ENCODE measurements at regions of chr4 and their contacts with region 1.

Region 1: DNA sequence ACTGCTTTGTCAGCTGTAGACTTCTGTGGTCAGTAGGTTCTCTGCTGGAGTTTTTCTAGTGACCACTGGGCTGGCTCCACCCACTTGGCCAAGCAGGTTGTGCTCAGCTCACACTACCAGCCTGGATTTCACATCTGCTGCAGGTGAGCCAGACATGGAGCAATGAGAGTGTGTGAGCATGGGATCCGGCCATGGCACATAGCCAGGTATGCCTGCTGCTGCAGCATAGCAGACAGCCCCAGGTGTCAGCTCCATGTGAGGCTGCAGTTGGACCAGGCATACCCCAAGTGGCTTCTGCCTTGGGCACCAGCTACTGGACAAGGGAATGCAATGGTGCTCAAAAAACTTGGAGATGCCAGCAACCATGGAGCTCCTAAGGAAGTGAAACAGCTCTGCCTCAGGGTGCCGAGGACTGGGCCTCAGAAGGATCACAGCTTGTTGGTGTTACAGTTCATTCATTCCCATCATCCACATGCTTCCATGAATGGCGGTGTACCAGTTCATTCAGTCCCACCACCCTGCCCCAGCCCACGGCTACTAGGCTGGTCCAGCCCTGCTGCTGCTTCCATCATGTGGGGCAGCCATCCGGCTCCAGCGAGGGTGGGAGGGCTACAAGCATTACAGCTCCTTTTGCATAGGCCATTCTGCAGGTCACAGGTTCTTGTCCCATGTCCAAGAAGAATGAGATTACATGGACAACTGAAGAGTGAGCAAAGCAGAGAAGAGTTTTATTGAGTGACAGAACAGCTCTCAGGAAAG is 389.1 kb upstream of the PCDH7 start:
- DNase-seq: no peak
- H3K4me3 ChIP-seq: no peak overlapping the region
- H3K27ac ChIP-seq: no peak overlapping the region
- H3K4me1 ChIP-seq: no peaks in the 10 kb centered on the region
- H3K27me3 ChIP-seq: no peaks in the 10 kb centered on the region
- CTCF ChIP-seq: no peak

Region 2: GRCh38 chr4:30056016-30056766 is 274.9 kb before region 1 on chr4:
- intact Hi-C with region 1: no loop called
- DNase-seq: no peak
- H3K4me3 ChIP-seq: no peak overlapping the region
- H3K27ac ChIP-seq: no peak overlapping the region
- H3K4me1 ChIP-seq: no peaks in the 10 kb centered on the region
- H3K27me3 ChIP-seq: no peaks in the 10 kb centered on the region
- CTCF ChIP-seq: no peak

Region 3: DNA sequence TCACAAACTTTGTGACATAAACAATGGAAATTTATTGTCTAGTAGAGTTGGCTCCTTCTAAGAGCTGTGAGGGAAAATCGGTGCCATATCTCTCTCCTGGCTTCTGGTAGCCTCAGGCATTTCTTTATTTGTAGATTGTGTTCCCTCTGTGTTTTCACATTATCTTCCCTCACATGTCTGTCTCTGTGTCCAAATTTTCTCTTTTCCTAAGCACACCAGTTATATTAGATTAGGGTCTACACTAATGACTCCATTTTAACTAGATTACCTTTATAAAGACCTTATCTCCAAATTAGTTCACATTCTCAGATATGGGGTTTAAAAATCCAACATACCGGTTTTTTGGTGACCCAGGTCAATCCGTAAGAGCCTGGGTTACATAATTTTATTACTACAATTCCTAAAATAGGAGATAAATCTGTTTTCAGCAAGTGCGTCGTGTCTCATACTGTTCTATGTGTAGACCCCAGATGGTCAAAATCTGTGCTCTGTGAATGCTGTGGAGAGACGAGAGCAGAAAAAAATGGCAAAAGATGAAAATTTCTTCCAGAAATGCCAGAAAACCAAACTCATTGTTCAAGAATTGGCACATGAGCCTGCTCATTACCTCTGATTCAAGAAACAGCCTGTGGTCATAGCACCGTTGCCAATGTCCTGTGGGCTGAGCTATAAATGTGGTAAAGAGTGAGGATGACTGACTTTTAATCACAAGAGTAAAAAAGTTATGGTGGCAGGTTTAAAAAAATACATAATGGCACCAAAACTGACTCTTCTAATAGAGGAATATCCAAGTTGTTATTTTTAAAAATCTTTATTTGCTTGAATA is 963.8 kb after region 1 on chr4:
- intact Hi-C with region 1: loop called (anchors 5 kb)
- DNase-seq: no peak
- H3K4me3 ChIP-seq: no peak overlapping the region
- H3K27ac ChIP-seq: no peak overlapping the region
- H3K4me1 ChIP-seq: no peaks in the 10 kb centered on the region
- H3K27me3 ChIP-seq: no peaks in the 10 kb centered on the region
- CTCF ChIP-seq: no peak

Region 4: GRCh38 chr4:32219306-32220075 is 1888.4 kb after region 1 on chr4:
- intact Hi-C with region 1: no loop called
- DNase-seq: no peak
- H3K4me3 ChIP-seq: no peak overlapping the region
- H3K27ac ChIP-seq: no peak overlapping the region
- H3K4me1 ChIP-seq: no peaks in the 10 kb centered on the region
- H3K27me3 ChIP-seq: no peaks in the 10 kb centered on the region
- CTCF ChIP-seq: no peak